Right ventricle myocardium superior (tissue), 1 donor: ENCODE measurements at regions of chr1 and their contacts with region 1.

Region 1: GRCh38 chr1:207919523-207920170 is 8.7 kb upstream of the CD34 start:
- DNase-seq: no peak
- ATAC-seq: peak; percentile 75

Region 2: GRCh38 chr1:207885129-207886032 is 34.3 kb before region 1 on chr1:
- intact Hi-C with region 1: loop called (anchors 5 kb)
- DNase-seq: peak; percentile 91
- ATAC-seq: peak; percentile 89

Region 3: DNA sequence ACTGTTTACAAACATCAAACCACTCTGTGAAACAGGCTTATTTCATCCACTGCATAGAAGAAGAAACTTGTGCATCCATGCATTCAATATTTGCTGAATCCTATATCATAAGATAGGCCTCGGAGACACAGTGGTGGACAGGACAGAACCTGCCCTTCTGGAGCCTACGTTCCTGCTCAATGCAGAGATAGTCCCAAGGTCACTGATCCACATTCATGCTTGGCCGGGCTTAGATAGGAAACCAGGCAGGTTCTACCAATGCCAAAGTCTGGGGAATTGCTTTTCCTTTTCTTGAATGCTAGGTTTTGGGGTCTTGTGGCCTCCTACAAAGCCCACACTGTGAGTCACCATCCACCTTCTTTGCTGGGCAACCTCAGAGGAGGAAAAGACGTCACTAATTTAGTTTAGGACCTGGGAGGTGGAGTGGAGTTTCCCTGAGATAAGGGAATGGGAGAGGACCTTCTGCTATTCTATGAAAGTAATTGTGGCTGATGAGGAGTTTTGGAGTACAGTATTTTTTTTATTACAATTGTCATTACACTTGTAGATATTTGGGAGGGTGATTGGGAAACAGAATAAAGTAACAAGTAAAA is 90.9 kb after region 1 on chr1:
- intact Hi-C with region 1: no loop called
- DNase-seq: no peak
- ATAC-seq: peak; percentile 32